Right cardiac atrium (tissue), 5 donors: ENCODE measurements at regions of chr18 and their contacts with region 1.

Region 1: GRCh38 chr18:54679318-54680149 is 88.5 kb downstream of the DYNAP start:
- DNase-seq: no peak
- ATAC-seq: peak in 1 of 2 donors; percentile 51
- H3K4me3 ChIP-seq: no peak overlapping the region
- H3K27ac ChIP-seq: no peak overlapping the region
- H3K4me1 ChIP-seq: no peaks in the 10 kb centered on the region
- H3K27me3 ChIP-seq: no peaks in the 10 kb centered on the region

Region 2: GRCh38 chr18:54392543-54393023 is 287.0 kb before region 1 on chr18:
- intact Hi-C with region 1: loop called in 1 of 4 experiments (anchors 10 kb)
- DNase-seq: no peak
- ATAC-seq: peak in 1 of 2 donors; percentile 21
- H3K4me3 ChIP-seq: no peak overlapping the region
- H3K27ac ChIP-seq: no peak overlapping the region
- H3K4me1 ChIP-seq: no peaks in the 10 kb centered on the region
- H3K27me3 ChIP-seq: no peaks in the 10 kb centered on the region

Region 3: DNA sequence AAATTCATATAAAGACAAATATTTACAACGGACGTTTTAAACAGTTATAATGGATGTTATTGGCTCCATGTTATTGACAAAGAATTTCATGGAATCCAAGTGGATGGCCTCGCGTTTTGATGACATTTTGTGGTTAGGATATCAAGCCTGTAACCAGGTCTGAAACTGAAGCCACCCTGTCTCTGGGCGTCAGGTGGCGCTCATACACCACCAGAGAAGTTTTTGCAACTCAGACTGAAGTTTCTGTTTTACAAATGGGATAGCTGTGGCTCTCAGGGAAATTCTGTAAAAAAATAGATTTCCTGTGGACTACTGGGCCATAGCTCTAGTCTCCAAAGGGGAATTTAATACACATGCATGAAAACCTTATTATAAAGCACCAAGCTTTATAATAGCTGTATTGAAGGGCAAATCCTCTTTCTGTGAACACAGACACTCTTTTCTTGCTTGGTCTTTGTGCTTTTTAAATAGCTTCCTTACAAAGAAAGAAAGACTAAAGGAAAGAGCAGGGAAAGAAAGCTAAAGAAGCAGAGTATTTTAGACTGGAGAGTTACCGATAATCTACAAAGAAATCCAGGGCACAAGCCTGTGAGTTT is 235.1 kb before region 1 on chr18:
- intact Hi-C with region 1: loop called in 2 of 4 experiments (anchors 10 kb)
- DNase-seq: peak; percentile 23 to 63 (median 56)
- ATAC-seq: peak; percentile 53 to 68
- H3K4me3 ChIP-seq: no peak overlapping the region
- H3K27ac ChIP-seq: no peak overlapping the region
- H3K4me1 ChIP-seq: no peaks in the 10 kb centered on the region
- H3K27me3 ChIP-seq: no peaks in the 10 kb centered on the region

Region 4: DNA sequence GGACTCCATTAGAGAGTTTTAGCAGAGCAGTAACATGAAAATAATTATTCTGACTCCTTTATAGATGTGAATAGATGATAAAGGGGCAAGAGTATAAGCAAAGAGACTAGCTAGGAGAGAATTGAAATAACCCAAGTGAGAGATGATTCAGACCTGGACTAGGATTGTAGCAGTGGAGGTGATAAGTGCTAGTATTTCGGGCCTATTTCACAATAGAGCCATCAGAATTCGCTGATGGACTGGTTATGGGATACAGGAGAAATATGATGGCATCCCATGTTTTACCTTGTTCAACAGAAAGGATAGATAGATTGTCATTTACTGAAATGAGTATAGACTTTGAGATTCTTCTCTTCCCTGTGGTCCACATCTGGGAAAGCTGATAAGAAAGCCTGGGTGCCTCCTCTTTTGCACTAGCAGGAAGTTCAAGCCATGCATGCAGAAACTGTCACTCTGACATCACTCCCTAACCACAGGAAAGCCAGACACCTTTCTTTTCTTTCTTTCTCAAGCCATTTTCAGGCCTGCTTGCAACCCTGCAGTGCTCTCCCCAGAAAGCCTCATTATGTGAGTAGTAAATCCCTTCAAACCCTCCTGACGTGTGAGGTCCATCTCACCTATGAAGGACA is 63.2 kb before region 1 on chr18:
- intact Hi-C with region 1: no loop called
- DNase-seq: no peak
- ATAC-seq: no peak
- H3K4me3 ChIP-seq: no peak overlapping the region
- H3K27ac ChIP-seq: no peak overlapping the region
- H3K4me1 ChIP-seq: no peaks in the 10 kb centered on the region
- H3K27me3 ChIP-seq: no peaks in the 10 kb centered on the region

Region 5: DNA sequence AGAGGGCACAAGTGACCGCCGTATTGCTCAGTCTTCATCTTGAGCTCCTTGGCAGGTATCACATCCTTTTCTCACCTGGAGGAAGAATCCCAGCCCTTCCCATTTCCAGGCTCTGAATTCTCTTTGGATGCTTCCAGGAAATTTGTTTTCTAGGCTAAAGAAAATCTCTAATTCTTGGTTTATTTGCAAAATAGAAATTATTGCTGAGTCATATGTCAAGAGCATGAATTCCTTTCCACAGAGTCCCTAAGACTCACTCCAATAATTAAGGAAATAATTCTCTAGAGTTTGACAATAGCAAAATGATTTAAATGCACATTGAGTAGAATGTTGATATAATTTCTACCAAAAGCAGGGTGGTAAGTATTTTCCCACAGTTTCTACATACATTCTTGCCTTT is 296.1 kb after region 1 on chr18:
- intact Hi-C with region 1: loop called in 3 of 4 experiments (anchors 5 to 10 kb)
- DNase-seq: no peak
- ATAC-seq: no peak
- H3K4me3 ChIP-seq: no peak overlapping the region
- H3K27ac ChIP-seq: no peak overlapping the region
- H3K4me1 ChIP-seq: no peaks in the 10 kb centered on the region
- H3K27me3 ChIP-seq: no peaks in the 10 kb centered on the region

Region 6: DNA sequence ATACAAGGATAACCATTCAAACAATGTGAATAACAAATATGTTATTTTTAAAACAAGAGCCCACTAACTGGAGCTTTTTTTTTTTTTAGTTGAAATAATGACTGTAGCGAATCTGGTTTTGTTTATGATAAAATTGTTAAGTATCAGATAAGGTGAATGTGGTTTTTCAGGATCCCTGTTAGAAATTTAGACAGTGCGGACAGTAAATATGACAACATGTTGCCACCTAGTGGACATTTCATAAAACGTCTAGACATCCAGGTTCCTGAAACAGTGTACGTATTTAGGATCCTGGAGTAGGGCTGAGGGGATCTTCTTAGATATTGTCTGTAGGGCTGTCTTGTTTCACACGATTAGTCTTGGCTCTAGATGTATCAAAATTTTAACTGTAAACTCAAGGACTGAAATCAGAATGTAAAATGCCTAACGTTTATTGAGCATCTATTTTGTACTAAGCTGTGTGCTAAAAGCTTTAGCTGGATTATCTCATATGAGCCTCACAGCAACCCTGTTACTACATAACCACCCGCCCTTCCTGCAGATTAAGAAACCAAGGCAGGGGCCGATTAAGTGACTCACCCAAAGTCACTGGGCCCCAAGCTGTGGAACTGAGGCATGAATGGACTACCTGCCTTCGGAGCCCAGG is 303.6 kb after region 1 on chr18:
- intact Hi-C with region 1: loop called in 3 of 4 experiments (anchors 5 to 10 kb)
- DNase-seq: no peak
- ATAC-seq: peak; percentile 64 to 70
- H3K4me3 ChIP-seq: no peak overlapping the region
- H3K27ac ChIP-seq: no peak overlapping the region
- H3K4me1 ChIP-seq: no peaks in the 10 kb centered on the region
- H3K27me3 ChIP-seq: no peaks in the 10 kb centered on the region